ENCODE measurements at regions of chr7 and their contacts with region 1.

Region 1: GRCh38 chr7:111594602-111595001 is 32.3 kb upstream of the IMMP2L start:
- DNase-seq: no peak
- ATAC-seq: no peak
- H3K4me3 ChIP-seq: no peak overlapping the region
- H3K27ac ChIP-seq: no peak overlapping the region
- H3K4me1 ChIP-seq: no peaks in the 10 kb centered on the region
- H3K27me3 ChIP-seq: no peaks in the 10 kb centered on the region
- CTCF ChIP-seq: no peak
- POLR2A ChIP-seq: no peak

Region 2: DNA sequence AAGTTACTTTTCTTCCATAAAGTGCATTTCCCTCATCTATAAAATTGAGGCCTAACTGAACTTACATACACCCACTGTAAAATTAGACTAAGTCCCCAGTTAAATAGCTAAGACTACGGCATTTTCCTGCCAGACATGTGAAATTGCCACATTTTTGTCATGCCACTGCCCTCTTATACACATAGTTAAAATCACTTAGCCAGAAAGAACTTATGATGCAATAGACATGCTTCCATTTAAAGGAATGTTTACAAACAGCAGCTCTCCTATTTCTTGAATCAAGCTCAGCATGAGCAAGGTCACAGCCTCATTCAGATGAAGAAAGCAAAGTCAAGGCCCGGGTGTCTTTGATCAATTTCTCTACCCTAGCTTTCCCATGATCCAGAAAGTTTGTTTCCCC is 328.0 kb before region 1 on chr7:
- intact Hi-C with region 1: no loop called
- DNase-seq: no peak
- ATAC-seq: no peak
- H3K4me3 ChIP-seq: no peak overlapping the region
- H3K27ac ChIP-seq: no peak overlapping the region
- H3K4me1 ChIP-seq: peaks cover 0 to 24% (median 7%) of the 10 kb centered on the region in 12 donors
- H3K27me3 ChIP-seq: no peaks in the 10 kb centered on the region
- CTCF ChIP-seq: no peak
- POLR2A ChIP-seq: no peak

Region 3: GRCh38 chr7:111527545-111527944 is 67.1 kb before region 1 on chr7:
- intact Hi-C with region 1: loop called in 1 of 10 experiments (anchors 10 kb)
- DNase-seq: no peak
- ATAC-seq: no peak
- H3K4me3 ChIP-seq: no peak overlapping the region
- H3K27ac ChIP-seq: no peak overlapping the region
- H3K4me1 ChIP-seq: peaks cover 0 to 27% (median 11%) of the 10 kb centered on the region in 12 donors
- H3K27me3 ChIP-seq: no peaks in the 10 kb centered on the region
- CTCF ChIP-seq: no peak
- POLR2A ChIP-seq: no peak